PC-9 (cell line): ENCODE measurements at regions of chr17 and their contacts with region 1.

Region 1: DNA sequence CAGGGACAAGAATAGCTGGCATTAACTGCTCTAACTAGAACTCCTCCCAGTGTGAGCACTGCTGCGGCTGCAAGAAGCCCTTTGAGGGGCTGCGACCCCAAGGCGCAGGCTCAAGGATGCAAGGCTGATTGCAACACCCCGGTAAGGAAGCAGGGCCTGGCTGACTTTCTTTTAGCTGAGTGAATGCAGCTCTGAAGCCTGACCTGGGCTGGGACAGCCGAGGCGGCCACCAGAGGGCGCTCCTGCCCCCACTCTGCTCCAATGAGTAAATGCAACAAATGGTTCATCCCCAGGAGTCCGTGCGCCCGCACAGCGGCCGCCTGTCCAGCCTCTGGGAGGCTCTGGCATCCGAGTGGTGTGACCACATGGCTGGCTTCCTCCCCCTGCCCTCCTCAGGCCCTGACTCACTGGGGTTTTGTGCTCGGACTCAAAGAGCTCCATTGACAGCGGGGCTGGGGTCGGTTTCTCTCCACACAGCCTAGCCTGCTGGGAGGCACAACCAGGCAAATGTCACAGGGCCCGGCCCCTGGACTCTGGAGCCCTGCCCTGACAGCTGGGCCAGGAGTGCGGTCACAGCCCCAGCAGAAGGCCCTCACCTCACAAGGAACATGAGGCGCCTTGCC is at the start of gene SMIM5:
- DNase-seq: peak; percentile 71 to 85
- H3K4me3 ChIP-seq: no peak within 1 kb of the TSS
- H3K27ac ChIP-seq: peak within 1 kb of the TSS; percentile 38; the same call in 1 of the 2 replicates
- H3K4me1 ChIP-seq: peaks cover 20% of the 10 kb centered on the region
- H3K27me3 ChIP-seq: no peaks in the 10 kb centered on the region
- CTCF ChIP-seq: peak; percentile 91
- total RNA-seq, gene SMIM5: 0.31 and 0.40 TPM in 2 replicates

Region 2: DNA sequence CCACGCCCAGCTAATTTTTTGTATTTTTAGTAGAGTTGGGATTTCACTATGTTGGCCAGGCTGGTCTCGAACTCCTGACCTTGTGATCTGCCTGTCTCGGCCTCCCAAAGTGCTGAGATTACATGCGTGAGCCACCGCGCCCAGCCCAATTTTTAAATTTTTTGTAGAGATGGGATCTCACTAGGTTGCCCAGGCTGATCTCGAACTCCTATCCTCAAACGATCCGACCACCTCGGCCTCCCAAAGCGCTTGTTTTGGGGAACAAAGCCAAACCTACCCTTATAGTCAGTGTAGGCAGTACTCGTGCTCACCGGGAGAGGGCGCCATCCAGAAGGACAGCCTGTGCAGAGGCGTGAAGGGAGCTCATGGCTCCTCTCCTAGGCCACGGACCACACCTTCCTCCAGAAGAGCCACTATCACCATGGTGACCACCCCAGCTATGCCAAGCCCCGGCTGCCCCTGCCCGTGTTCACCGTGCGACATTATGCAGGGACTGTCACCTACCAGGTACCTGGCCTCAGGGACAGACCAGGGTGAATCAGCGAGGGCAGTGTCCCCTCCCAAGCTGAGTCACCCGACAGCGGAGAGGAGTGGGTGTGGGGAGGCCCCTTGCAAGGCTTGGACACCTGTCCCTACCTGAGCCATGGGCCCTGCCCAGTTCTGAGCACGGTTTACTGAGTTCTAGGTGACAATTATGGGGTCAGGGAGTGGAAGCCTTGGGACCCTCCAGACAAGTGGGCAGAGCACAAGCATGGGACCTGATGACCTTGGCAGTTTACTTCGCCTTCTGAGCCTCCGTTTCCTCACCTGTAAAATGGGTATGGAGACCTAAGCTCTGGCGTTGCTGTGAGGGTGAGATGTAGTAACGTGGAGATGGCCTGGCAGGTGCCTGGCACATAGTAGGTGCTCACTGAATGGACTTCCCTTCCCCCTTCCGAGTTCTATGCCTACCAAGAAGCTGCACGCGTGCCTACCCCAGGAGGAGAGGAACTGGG is 31.6 kb before region 1 on chr17:
- CTCF ChIA-PET with region 1: interaction called, 49 read pairs
- POLR2A ChIA-PET with region 1: interaction called, 3 read pairs
- intact Hi-C with region 1: loop called (anchors 1 kb)
- DNase-seq: peak; percentile 92 to 95
- H3K4me3 ChIP-seq: no peak overlapping the region
- H3K27ac ChIP-seq: peak overlapping the region; percentile 43; the same call in 1 of the 2 replicates
- H3K4me1 ChIP-seq: peaks cover 42% of the 10 kb centered on the region
- H3K27me3 ChIP-seq: no peaks in the 10 kb centered on the region
- CTCF ChIP-seq: peak; percentile 95

Region 3: DNA sequence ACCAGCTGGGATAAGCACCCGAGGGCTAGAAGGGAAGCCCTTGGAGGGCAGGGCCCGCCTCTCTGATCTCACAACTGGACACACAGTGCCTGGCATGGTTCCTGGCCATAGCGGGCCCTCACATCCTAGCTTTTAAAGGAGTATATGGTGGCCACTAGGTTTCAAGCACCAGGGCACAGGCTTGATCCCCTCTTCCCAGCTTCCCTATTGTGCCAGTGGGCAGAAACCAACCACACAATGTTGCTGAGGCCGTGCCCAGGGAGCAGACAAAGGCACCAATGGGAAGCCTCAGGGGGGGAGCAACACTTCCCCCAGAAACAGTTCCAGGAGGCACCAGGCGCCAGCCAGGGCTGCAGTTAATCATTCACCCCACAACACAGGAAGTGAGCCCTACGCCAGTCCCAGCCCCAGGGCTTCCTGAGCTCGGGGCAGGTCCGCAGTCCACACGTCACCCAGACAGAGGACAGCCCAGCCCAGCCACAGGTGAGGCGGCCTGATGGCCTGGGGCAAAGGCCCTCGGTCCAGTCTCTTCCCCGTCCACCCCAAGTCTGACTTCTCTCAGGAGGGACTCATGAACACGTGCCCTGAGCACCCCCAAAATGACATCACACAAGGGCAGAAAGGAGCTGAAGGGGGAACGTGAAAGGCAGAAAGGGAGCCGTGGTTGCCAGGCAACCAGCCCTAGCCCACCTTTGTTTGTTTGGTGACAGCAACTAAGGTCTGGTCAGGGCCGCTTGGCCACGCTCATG is 13.1 kb after region 1 on chr17:
- CTCF ChIA-PET with region 1: interaction called, 40 read pairs
- POLR2A ChIA-PET with region 1: interaction called, 7 read pairs
- intact Hi-C with region 1: no loop called
- DNase-seq: peak; percentile 84 to 85
- H3K4me3 ChIP-seq: no peak overlapping the region
- H3K27ac ChIP-seq: peak overlapping the region; percentile 92
- H3K4me1 ChIP-seq: peaks cover 51% of the 10 kb centered on the region
- H3K27me3 ChIP-seq: no peaks in the 10 kb centered on the region
- CTCF ChIP-seq: no peak

Region 4: GRCh38 chr17:75667021-75667790 is 34.2 kb after region 1 on chr17 and contains the starts of genes RECQL5 and SAP30BP:
- CTCF ChIA-PET with region 1: interaction called, 5 read pairs
- POLR2A ChIA-PET with region 1: interaction called, 4 read pairs
- intact Hi-C with region 1: loop called (anchors 5 kb)
- DNase-seq: peak; percentile 91 to 92
- H3K4me3 ChIP-seq: peak within 1 kb of the TSS; percentile 100
- H3K27ac ChIP-seq: peak within 1 kb of the TSS; percentile 73
- H3K4me1 ChIP-seq: peaks cover 21% of the 10 kb centered on the region
- H3K27me3 ChIP-seq: no peaks in the 10 kb centered on the region
- CTCF ChIP-seq: 0 out of 2 replicates have a peak, but pooled peaks have one; percentile 16
- total RNA-seq, gene RECQL5: 41.0 and 44.2 TPM in 2 replicates
- total RNA-seq, gene SAP30BP: 79.5 and 80.3 TPM in 2 replicates

Region 5: DNA sequence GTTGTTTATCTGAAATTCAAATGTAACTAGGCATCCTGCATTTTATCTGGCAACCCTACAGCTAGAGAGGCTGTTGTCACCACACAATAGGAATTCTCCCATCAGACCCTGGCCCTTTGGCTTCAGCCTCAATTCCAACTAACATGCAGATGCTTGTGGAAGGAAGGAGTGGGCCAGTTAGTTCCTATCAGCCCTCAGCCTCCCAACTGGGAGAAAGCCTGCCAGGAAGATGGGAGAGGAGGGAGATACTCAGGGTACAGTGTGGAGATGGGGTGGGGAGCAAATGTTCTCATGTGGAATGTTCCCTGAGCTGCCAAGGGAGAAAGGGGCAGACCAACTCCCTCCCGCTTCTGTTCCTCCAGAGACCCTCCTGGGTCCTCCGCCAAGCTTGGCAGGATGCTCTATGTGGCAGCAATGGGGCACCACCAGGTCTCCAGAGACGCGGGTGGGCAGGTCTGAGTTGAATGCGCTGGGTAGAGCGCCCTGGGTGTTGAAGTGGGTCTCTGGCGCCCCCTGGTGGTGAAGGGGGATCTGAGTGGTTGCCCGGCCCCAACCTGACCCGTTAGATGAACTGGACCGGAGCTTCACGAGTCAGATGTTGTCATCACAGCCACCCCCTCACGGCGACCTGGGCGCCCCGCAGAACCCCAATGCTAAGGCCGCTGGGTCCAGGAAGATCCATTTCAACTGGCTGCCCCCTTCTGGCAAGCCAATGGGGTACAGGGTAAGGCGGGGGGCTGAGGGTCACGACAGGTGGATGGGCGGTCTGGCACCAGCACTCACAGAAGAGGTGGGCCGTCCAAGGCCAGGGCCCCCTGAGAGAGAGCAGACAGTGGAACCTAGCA is 116.8 kb after region 1 on chr17:
- CTCF ChIA-PET with region 1: interaction called, 6 read pairs
- POLR2A ChIA-PET with region 1: no interaction called
- intact Hi-C with region 1: loop called (anchors 2 kb)
- DNase-seq: peak in 1 of 2 experiments; percentile 64
- H3K4me3 ChIP-seq: no peak overlapping the region
- H3K27ac ChIP-seq: no peak overlapping the region
- H3K4me1 ChIP-seq: 0 out of 2 replicates have a peak, but pooled peaks cover 3% of the 10 kb centered on the region
- H3K27me3 ChIP-seq: no peaks in the 10 kb centered on the region
- CTCF ChIP-seq: peak; percentile 92